Heart left ventricle (tissue), 16 donors: ENCODE measurements at regions of chr5 and their contacts with region 1.

Region 1: DNA sequence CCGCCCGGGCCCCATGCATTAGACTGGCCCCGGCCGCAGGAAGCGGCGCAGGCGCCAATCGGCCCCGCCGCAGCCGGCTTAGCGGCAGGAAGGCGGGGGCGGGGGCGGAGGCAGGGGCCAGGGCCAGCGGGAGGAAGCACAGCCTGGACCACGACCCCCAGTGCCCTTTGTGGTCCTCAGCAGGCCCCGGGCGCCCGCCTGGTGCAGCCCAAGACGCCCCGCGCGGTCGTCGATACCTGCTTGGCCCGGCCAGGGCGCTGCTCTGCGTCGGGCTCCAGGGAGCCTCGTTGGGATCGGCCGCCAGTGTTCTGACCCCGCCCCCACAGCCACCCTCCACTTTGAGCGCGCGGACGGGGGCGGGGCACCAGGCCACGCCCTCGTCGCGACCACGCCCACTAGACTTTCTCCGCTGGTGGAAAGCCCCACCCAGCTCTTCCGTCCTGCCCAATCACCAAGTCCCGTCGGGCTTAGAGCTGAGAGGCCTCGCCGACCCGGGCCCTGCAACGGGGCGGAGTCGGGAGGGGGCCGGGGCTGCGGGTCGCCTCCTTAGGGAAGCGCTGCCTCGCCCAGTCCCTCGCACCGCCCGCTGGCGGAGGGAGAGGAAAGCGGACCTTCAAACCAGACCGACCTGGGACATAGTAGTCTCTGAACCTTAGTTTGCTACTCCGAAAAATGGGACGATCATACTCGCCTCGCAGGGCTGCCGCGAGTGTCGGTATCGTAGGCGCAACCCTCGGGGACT is at the start of gene PDLIM7:
- DNase-seq: peak; percentile 95 to 98 (median 97)
- ATAC-seq: peak; percentile 80 to 87 (median 84)
- H3K4me3 ChIP-seq: peak within 1 kb of the TSS; percentile 68 to 96 (median 78)
- H3K27ac ChIP-seq: peak within 1 kb of the TSS; percentile 73 to 98 (median 95)
- H3K4me1 ChIP-seq: peaks cover 8 to 74% (median 59%) of the 10 kb centered on the region in 12 donors
- H3K27me3 ChIP-seq: no peaks in the 10 kb centered on the region
- CTCF ChIP-seq: peak in 5 of 12 donors; percentile 14 to 39 (median 17)
- POLR2A ChIP-seq: peak; percentile 77 to 98
- total RNA-seq, gene PDLIM7: 36.3 to 124 (median 49.4) TPM

Region 2: GRCh38 chr5:177311723-177312648 is 185.5 kb before region 1 on chr5 and contains the start of gene MXD3:
- intact Hi-C with region 1: loop called in 3 of 10 experiments (anchors 5 to 10 kb)
- DNase-seq: peak; percentile 96 to 99 (median 97)
- ATAC-seq: peak; percentile 81 to 92 (median 90)
- H3K4me3 ChIP-seq: peak within 1 kb of the TSS; percentile 6 to 65 (median 58)
- H3K27ac ChIP-seq: peak within 1 kb of the TSS in 1 of 12 donors; percentile 10
- H3K4me1 ChIP-seq: peaks cover 0 to 65% (median 25%) of the 10 kb centered on the region in 12 donors
- H3K27me3 ChIP-seq: no peaks in the 10 kb centered on the region
- CTCF ChIP-seq: no peak
- POLR2A ChIP-seq: no peak
- total RNA-seq, gene MXD3: 0.52 to 9.1 (median 3.1) TPM

Region 3: DNA sequence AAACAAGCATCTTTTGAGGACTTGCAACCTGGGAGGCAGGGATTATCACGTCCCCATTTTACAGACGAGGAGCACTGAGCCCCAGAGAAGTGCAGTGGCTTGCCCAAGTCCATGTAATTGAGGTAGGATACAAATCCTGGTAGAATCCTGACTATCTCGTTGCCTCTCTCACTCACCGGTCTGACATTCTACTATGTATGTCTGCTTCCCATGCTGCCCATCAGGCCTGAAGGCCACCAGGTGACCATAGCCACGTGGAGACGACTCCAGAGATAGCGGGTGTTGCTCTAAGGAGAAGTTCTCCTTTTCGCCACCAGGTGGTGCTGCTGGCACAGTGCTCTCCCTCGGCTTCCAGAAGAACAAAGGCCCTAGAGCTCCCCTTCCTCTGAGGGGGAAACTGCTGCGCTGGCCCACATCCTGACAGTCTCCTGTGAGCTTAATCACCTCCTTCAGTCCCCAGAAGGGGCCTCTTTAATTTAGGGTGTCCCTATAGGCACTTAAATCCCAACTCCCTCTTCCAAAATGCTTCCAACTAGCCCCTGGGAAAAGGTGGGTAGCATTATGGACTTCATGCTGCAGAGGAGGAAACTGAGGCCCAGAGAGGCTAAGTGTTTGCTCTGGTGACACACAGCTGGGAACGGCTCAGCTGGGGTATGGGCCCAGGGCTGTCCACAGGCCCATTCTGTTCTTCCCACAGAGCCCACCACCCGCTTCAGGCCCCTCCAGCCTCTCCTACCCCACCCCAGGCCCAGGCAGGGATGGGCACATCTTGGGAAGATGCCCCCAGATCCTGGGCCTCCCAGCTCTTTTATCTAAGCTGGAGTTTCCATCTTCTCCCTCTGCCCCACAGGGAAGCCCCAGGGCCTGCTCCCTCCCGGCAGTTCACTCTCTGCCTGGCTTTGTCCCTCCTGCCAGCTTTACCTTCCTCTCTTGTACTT is 106.8 kb before region 1 on chr5:
- intact Hi-C with region 1: loop called in 9 of 10 experiments (anchors 1 to 5 kb)
- DNase-seq: peak; percentile 69 to 83 (median 79)
- ATAC-seq: peak; percentile 77 to 89 (median 82)
- H3K4me3 ChIP-seq: no peak overlapping the region
- H3K27ac ChIP-seq: peak overlapping the region in 1 of 12 donors; percentile 68
- H3K4me1 ChIP-seq: peaks cover 0 to 25% (median 0%) of the 10 kb centered on the region in 12 donors
- H3K27me3 ChIP-seq: peaks cover 0 to 25% (median 0%) of the 10 kb centered on the region in 9 donors
- CTCF ChIP-seq: peak; percentile 4 to 99 (median 98)
- POLR2A ChIP-seq: no peak

Region 4: DNA sequence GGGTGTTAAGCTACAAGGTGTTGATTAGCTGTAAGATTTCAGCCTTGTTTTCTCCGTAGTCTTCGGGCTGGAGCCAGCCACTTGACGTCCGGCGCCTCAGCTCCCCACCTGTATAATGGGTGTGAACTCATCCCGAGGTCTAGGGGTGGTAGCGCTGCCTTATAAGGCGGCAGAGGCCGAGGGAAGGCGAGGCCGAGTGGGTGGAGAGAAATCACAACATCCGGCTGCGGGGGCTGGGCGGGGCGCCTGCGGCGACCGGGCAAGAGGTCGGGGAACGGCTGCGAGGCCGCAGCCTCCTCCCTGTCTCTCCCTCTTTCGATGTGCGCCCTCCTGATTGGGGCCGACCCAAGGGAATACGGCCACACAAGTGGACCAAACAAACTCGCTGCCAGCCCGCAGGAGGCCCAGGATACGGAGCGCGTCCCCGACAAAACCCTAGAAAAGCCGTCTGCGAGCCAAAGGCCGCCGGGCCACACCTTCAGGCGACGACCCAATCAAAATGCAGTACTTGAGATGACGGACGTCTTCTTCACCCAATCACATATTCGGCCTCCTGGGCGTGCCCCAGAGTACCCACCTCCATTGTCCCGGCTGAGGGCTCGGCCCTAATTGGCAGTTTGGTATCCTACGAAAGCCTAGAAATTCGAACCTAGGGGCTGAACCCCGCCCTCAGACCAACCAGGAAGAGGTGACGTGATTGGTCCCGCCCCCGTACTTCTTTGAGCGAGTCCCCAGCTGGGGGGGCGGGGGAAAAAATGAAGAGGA is 71.5 kb before region 1 on chr5:
- intact Hi-C with region 1: loop called in 1 of 10 experiments (anchors 1 kb)
- DNase-seq: peak; percentile 99 to 100 (median 100)
- ATAC-seq: peak; percentile 97 to 99 (median 98)
- H3K4me3 ChIP-seq: peak overlapping the region; percentile 42 to 95 (median 62)
- H3K27ac ChIP-seq: peak overlapping the region; percentile 77 to 98 (median 94)
- H3K4me1 ChIP-seq: peaks cover 0 to 50% (median 24%) of the 10 kb centered on the region in 12 donors
- H3K27me3 ChIP-seq: no peaks in the 10 kb centered on the region
- CTCF ChIP-seq: no peak
- POLR2A ChIP-seq: peak; percentile 52 to 86

Region 5: GRCh38 chr5:177446200-177447065 is 51.0 kb before region 1 on chr5 and contains the start of gene PRR7:
- intact Hi-C with region 1: no loop called
- DNase-seq: peak in 4 of 5 donors; percentile 63 to 77 (median 71)
- ATAC-seq: peak in 3 of 4 donors; percentile 57 to 72 (median 69)
- H3K4me3 ChIP-seq: peak within 1 kb of the TSS; percentile 53 to 78 (median 62)
- H3K27ac ChIP-seq: peak within 1 kb of the TSS in 3 of 12 donors; percentile 4 to 60 (median 30)
- H3K4me1 ChIP-seq: peaks cover 2 to 38% (median 21%) of the 10 kb centered on the region in 12 donors
- H3K27me3 ChIP-seq: peaks cover 0 to 19% (median 3%) of the 10 kb centered on the region in 9 donors
- CTCF ChIP-seq: peak in 4 of 12 donors; percentile 8 to 21 (median 16)
- POLR2A ChIP-seq: no peak
- total RNA-seq, gene PRR7: 0.82 to 5.0 (median 1.8) TPM

Region 6: GRCh38 chr5:177473461-177474001 is 23.9 kb before region 1 on chr5 and contains the start of gene DBN1:
- intact Hi-C with region 1: loop called in 2 of 10 experiments (anchors 2 kb)
- DNase-seq: peak in 2 of 5 donors; percentile 65 to 69
- ATAC-seq: peak in 3 of 4 donors; percentile 18 to 59 (median 58)
- H3K4me3 ChIP-seq: peak within 1 kb of the TSS; percentile 63 to 97 (median 76)
- H3K27ac ChIP-seq: peak within 1 kb of the TSS; percentile 65 to 93 (median 84)
- H3K4me1 ChIP-seq: peaks cover 0 to 68% (median 49%) of the 10 kb centered on the region in 12 donors
- H3K27me3 ChIP-seq: peaks cover 0 to 31% (median 5%) of the 10 kb centered on the region in 9 donors
- CTCF ChIP-seq: no peak
- POLR2A ChIP-seq: no peak
- total RNA-seq, gene DBN1: 12.3 to 60.7 (median 23.3) TPM

Region 7: GRCh38 chr5:177553671-177554429 is 56.4 kb after region 1 on chr5:
- intact Hi-C with region 1: no loop called
- DNase-seq: peak; percentile 46 to 78 (median 51)
- ATAC-seq: peak in 3 of 4 donors; percentile 38 to 58 (median 46)
- H3K4me3 ChIP-seq: peak overlapping the region; percentile 61 to 99 (median 94)
- H3K27ac ChIP-seq: peak overlapping the region; percentile 58 to 89 (median 82)
- H3K4me1 ChIP-seq: peaks cover 3 to 49% (median 28%) of the 10 kb centered on the region in 12 donors
- H3K27me3 ChIP-seq: no peaks in the 10 kb centered on the region
- CTCF ChIP-seq: no peak
- POLR2A ChIP-seq: no peak